ENCODE measurements at regions of chr2 and their contacts with region 1.

Region 1: DNA sequence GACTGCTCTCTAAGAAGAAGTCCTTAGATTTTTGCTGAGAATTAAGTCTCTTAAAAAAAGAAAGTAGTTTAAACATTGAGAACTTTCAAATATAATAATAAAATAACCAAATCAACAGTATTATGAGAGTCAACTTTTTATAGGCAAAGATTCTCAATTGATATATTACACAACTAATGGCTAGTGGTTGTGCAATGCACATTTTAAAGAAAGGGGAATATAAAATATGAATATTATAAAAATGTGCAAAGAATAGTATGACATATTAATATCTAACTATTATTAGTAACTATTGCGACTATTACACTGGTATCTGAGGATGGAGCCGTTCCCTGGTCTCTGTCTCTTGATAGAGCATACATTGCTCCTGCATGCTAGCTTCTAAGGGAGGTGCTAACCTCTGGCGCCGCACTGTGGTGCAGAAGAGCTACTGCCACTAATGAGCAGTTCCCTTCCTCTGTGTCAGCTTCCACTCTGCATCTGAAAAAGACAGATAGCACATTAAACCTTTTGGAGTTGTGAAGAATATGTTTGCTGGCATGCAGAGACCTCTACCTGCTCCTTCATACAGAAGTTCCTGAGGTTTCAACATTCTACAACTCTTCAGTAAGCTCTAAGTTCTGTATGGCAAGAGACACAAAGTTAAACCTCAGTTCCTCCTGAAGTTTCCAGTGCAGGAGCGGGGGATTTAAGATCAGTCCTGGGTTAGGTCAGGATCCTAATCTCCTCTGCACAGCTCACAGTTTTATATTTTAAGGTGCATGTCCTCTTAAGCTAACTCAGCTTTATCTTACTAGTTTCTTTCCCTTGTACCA is 3.5 kb upstream of the SLC9A2 start:
- DNase-seq: no peak
- H3K4me3 Mint-ChIP-seq: no peak overlapping the region
- H3K27ac Mint-ChIP-seq: no peak overlapping the region
- H3K4me1 Mint-ChIP-seq: peaks cover 11% of the 10 kb centered on the region
- H3K27me3 Mint-ChIP-seq: peaks cover 58% of the 10 kb centered on the region

Region 2: GRCh38 chr2:101736861-101737291 is 879.0 kb before region 1 on chr2:
- intact Hi-C with region 1: no loop called
- DNase-seq: no peak
- H3K4me3 Mint-ChIP-seq: no peak overlapping the region
- H3K27ac Mint-ChIP-seq: no peak overlapping the region
- H3K4me1 Mint-ChIP-seq: peaks cover 55% of the 10 kb centered on the region
- H3K27me3 Mint-ChIP-seq: no peaks in the 10 kb centered on the region

Region 3: GRCh38 chr2:102473020-102473419 is 142.8 kb before region 1 on chr2 and contains the start of gene SLC9A4:
- intact Hi-C with region 1: loop called (anchors 2 kb)
- DNase-seq: peak; percentile 13
- H3K4me3 Mint-ChIP-seq: no peak within 1 kb of the TSS
- H3K27ac Mint-ChIP-seq: no peak within 1 kb of the TSS
- H3K4me1 Mint-ChIP-seq: no peaks in the 10 kb centered on the region
- H3K27me3 Mint-ChIP-seq: peaks cover 50% of the 10 kb centered on the region
- total RNA-seq, gene SLC9A4: 0.09 TPM in 2 replicates

Region 4: GRCh38 chr2:102520028-102520427 is 95.8 kb before region 1 on chr2:
- intact Hi-C with region 1: loop called (anchors 5 kb)
- DNase-seq: no peak
- H3K4me3 Mint-ChIP-seq: no peak overlapping the region
- H3K27ac Mint-ChIP-seq: no peak overlapping the region
- H3K4me1 Mint-ChIP-seq: no peaks in the 10 kb centered on the region
- H3K27me3 Mint-ChIP-seq: peaks cover 8% of the 10 kb centered on the region

Region 5: DNA sequence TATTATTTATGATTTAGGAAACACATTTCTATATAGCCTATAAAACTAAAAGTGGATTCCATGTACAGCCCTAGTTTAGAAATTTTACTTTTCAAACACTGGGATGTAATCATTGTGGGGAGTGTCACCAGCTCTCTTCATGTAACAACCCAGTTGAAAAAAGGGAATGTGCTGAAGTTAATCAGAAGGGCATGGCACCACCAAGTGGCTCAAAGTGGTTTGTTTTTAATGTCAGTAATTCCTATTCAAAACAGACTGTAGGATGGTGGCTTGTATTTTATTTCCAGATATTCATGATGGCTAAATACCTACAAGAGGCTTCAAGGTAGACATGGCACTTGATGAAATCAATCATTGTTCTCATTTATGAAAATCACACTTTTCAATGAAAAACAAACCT is 87.9 kb after region 1 on chr2:
- intact Hi-C with region 1: loop called (anchors 10 kb)
- DNase-seq: no peak
- H3K4me3 Mint-ChIP-seq: no peak overlapping the region
- H3K27ac Mint-ChIP-seq: no peak overlapping the region
- H3K4me1 Mint-ChIP-seq: no peaks in the 10 kb centered on the region
- H3K27me3 Mint-ChIP-seq: peaks cover 6% of the 10 kb centered on the region